ENCODE measurements at regions of chr16 and their contacts with region 1.

Region 1: DNA sequence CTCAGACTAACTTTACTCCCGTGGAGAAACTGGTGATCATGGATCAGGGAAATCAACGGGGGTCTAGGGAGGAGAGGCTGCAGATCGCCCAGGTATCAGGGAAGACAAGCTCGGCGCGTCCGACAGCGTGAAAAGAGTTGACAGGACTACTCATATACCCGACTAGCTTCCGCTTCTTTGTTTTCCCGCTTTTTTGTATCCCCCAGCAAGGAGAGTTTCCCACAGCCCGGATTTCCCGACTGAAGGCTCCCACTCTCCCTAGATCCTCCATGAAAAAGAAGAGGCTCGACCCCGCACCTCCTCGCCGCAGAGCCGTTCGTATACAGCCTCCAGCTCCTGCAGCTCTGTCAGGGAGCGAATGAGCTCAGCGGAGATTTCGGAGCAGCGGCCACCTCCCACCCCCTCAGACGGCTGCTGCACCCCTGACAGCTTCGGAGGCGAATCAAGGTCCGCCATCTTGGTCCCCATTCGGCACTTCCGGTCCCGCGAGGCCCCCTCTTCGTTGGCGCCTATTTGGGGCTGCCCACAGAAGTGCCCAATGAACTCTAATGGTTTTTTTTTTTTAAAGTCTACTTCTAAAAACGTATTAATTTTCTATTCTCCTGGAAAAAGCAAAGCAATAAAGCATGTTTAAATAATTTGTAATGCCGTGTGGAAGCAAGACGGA is at the start of gene COG4:
- DNase-seq: peak; percentile 72 to 94 (median 90)
- ATAC-seq: peak; percentile 91
- H3K4me3 ChIP-seq: peak within 1 kb of the TSS; percentile 100
- H3K4me3 Mint-ChIP-seq: peak within 1 kb of the TSS; percentile 93 to 100 (median 98)
- H3K27ac ChIP-seq: peak within 1 kb of the TSS; percentile 95
- H3K27ac Mint-ChIP-seq: peak within 1 kb of the TSS; percentile 98 to 100 (median 99)
- H3K4me1 ChIP-seq: peaks cover 27 to 41% of the 10 kb centered on the region in 2 donors
- H3K4me1 Mint-ChIP-seq: peaks cover 30 to 66% (median 55%) of the 10 kb centered on the region in 7 donors
- H3K27me3 ChIP-seq: no peaks in the 10 kb centered on the region
- H3K27me3 Mint-ChIP-seq: no peaks in the 10 kb centered on the region
- total RNA-seq, gene COG4: 38.3 to 68.6 (median 58.7) TPM

Region 2: GRCh38 chr16:69386596-69386995 is 1136.6 kb before region 1 on chr16:
- CTCF ChIA-PET with region 1: no interaction called
- POLR2A ChIA-PET with region 1: no interaction called
- intact Hi-C with region 1: loop called in 1 of 2 experiments (anchors 5 kb)
- DNase-seq: no peak
- ATAC-seq: no peak
- H3K4me3 ChIP-seq: no peak overlapping the region
- H3K4me3 Mint-ChIP-seq: peak overlapping the region in 8 of 10 donors; percentile 86 to 96 (median 92)
- H3K27ac ChIP-seq: peak overlapping the region; percentile 95
- H3K27ac Mint-ChIP-seq: peak overlapping the region in 6 of 9 donors; percentile 90 to 99 (median 95)
- H3K4me1 ChIP-seq: peaks cover 10 to 27% of the 10 kb centered on the region in 2 donors
- H3K4me1 Mint-ChIP-seq: peaks cover 22 to 37% (median 35%) of the 10 kb centered on the region in 7 donors
- H3K27me3 ChIP-seq: no peaks in the 10 kb centered on the region
- H3K27me3 Mint-ChIP-seq: no peaks in the 10 kb centered on the region

Region 3: DNA sequence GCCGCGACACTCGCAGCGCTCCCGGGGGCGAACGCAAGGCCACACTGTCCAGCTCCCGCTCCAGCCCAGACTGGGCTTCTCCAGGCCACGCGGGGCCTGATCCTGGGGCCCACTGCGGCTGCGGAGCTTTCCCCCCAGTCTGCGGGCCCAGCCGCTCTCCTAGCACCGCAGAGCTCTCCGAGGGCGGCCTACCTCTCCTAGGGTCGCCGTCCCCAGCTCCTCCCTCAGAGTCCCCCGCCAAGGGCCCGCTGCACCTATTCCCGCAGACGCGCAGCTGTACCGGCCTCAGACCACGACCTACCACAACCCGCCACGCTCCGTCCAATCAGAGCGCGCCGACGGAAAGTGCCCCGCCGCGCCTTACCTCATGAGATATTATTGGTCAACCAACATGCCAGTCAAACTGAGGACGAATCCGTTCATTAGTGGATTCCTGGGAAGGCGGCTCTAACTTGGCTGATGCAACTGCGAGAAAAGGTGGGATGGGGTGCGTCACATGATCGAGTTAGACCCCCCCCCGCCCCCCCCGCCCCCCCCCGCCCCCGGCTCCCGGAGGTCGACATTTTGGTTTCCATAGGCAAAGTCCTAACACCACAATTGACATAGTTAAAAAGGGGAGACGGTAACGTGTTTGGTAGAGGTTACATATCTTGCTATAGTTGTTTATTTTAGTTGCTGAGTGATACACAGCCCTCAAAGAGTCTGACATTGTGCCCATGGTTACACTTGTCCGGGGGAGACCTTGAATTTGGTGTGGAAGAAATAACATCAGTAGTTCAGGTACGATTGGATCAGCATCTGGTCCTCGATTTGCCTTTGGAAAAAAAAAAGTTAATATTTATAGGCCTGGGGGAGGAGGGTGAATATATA is 233.7 kb before region 1 on chr16 and contains the start of gene AARS1:
- CTCF ChIA-PET with region 1: no interaction called
- POLR2A ChIA-PET with region 1: interaction called, 8 read pairs
- intact Hi-C with region 1: loop called (anchors 1 to 2 kb)
- DNase-seq: peak; percentile 79 to 97 (median 96)
- ATAC-seq: peak; percentile 98
- H3K4me3 ChIP-seq: peak within 1 kb of the TSS; percentile 65
- H3K4me3 Mint-ChIP-seq: peak within 1 kb of the TSS; percentile 90 to 100 (median 98)
- H3K27ac ChIP-seq: peak within 1 kb of the TSS; percentile 85
- H3K27ac Mint-ChIP-seq: peak within 1 kb of the TSS; percentile 95 to 99 (median 98)
- H3K4me1 ChIP-seq: no peaks in the 10 kb centered on the region
- H3K4me1 Mint-ChIP-seq: peaks cover 6 to 37% (median 25%) of the 10 kb centered on the region in 7 donors
- H3K27me3 ChIP-seq: no peaks in the 10 kb centered on the region
- H3K27me3 Mint-ChIP-seq: peaks cover 0 to 2% (median 0%) of the 10 kb centered on the region in 5 donors
- total RNA-seq, gene AARS1: 24.2 to 96.7 (median 94.0) TPM

Region 4: GRCh38 chr16:70395345-70395901 is 127.8 kb before region 1 on chr16:
- CTCF ChIA-PET with region 1: no interaction called
- POLR2A ChIA-PET with region 1: no interaction called
- intact Hi-C with region 1: loop called in 1 of 2 experiments (anchors 1 kb)
- DNase-seq: peak in 7 of 9 donors; percentile 38 to 75 (median 54)
- ATAC-seq: peak; percentile 86
- H3K4me3 ChIP-seq: no peak overlapping the region
- H3K4me3 Mint-ChIP-seq: no peak overlapping the region
- H3K27ac ChIP-seq: no peak overlapping the region
- H3K27ac Mint-ChIP-seq: peak overlapping the region in 1 of 9 donors; percentile 46
- H3K4me1 ChIP-seq: no peaks in the 10 kb centered on the region
- H3K4me1 Mint-ChIP-seq: peaks cover 0 to 11% (median 0%) of the 10 kb centered on the region in 7 donors
- H3K27me3 ChIP-seq: no peaks in the 10 kb centered on the region
- H3K27me3 Mint-ChIP-seq: no peaks in the 10 kb centered on the region

Region 5: DNA sequence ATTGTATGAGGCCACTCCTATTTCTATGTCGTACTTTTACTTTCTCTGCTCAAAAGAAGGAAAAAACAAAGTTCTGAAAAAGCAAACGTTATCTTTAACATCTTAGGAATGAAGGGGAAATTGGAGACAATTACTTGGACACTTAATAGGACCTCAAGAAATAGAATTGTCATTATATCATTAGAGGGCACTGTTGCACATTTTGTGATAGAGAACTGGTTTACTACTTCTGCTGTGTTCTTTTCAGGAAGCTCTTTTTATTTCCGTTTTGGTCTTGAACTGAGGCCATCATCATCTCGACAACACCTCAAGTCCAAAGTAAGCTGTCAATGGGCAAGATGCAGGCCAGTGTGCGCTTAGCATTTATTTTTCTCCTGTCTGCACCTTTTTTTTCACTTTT is 14.5 kb before region 1 on chr16:
- CTCF ChIA-PET with region 1: interaction called, 3 read pairs
- POLR2A ChIA-PET with region 1: interaction called, 4 read pairs
- intact Hi-C with region 1: loop called in 1 of 2 experiments (anchors 2 kb)
- DNase-seq: peak in 2 of 9 donors; percentile 5 to 16
- ATAC-seq: peak; percentile 63
- H3K4me3 ChIP-seq: no peak overlapping the region
- H3K4me3 Mint-ChIP-seq: no peak overlapping the region
- H3K27ac ChIP-seq: no peak overlapping the region
- H3K27ac Mint-ChIP-seq: peak overlapping the region in 8 of 9 donors; percentile 35 to 87 (median 70)
- H3K4me1 ChIP-seq: no peaks in the 10 kb centered on the region
- H3K4me1 Mint-ChIP-seq: peaks cover 6 to 13% (median 9%) of the 10 kb centered on the region in 7 donors
- H3K27me3 ChIP-seq: no peaks in the 10 kb centered on the region
- H3K27me3 Mint-ChIP-seq: no peaks in the 10 kb centered on the region

Region 6: GRCh38 chr16:71288890-71289733 is 765.9 kb after region 1 on chr16 and contains the start of gene CMTR2:
- CTCF ChIA-PET with region 1: no interaction called
- POLR2A ChIA-PET with region 1: no interaction called
- intact Hi-C with region 1: loop called in 1 of 2 experiments (anchors 5 kb)
- DNase-seq: peak; percentile 77 to 92 (median 87)
- ATAC-seq: peak; percentile 97
- H3K4me3 ChIP-seq: peak within 1 kb of the TSS; percentile 87
- H3K4me3 Mint-ChIP-seq: peak within 1 kb of the TSS; percentile 81 to 93 (median 89)
- H3K27ac ChIP-seq: peak within 1 kb of the TSS; percentile 82
- H3K27ac Mint-ChIP-seq: peak within 1 kb of the TSS; percentile 75 to 95 (median 92)
- H3K4me1 ChIP-seq: peaks cover 5 to 14% of the 10 kb centered on the region in 2 donors
- H3K4me1 Mint-ChIP-seq: peaks cover 21 to 36% (median 30%) of the 10 kb centered on the region in 7 donors
- H3K27me3 ChIP-seq: no peaks in the 10 kb centered on the region
- H3K27me3 Mint-ChIP-seq: peaks cover 13 to 26% (median 19%) of the 10 kb centered on the region in 5 donors
- total RNA-seq, gene CMTR2: 8.0 to 28.2 (median 22.3) TPM